Thyroid gland (tissue), 4 donors: ENCODE measurements at regions of chr12 and their contacts with region 1.

Region 1: DNA sequence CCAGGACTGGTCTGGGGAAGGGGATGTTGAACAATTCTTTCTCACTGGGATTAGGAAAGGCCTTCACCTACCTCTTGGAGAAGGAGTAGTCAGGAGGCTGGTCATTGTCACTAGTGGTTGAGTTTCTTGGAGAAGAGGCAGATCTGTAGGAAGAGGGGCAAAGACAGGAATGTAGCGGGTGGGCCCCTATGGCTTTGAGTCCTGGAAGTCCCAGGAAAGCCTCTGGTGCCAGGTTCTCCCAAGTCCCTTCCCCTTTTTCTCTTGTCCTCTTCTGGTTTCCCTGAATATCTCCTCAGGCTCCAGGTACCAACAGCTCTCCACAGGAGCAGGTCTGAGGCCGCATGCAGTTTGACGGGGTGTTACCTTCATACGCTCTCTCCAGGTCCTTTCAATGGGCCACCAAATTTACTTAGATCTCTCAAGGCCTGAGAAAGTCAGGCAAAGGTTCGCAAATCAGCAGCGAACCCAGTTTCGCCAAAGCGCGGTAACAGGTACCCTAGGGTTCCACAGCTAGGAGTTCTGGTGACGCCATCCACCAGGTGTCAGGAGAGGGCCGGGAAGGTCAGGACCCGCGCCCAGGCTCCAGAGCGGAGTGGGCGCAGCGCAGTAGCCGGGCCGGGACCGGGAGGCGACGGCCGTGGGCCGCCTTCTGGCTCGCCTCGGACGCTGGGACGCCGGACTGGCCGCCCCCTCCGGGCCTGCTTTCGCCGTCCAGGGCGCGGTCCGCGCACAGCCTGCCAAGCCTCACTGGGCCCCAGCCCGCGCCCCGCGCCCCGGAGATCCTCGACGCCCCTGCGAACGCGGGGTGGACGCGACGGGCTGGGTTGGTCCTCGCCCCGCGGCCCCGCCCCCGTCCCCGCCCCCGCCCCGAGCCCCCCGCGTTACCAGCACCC is 795 bp downstream of the SMAGP start:
- DNase-seq: peak; percentile 58 to 64
- H3K4me3 ChIP-seq: peak overlapping the region in 2 of 3 donors; percentile 49 to 63
- H3K27ac ChIP-seq: peak overlapping the region in 2 of 3 donors; percentile 61 to 73
- H3K4me1 ChIP-seq: peaks cover 9% of the 10 kb centered on the region in 2 donors
- H3K27me3 ChIP-seq: no peaks in the 10 kb centered on the region
- CTCF ChIP-seq: peak in 4 of 6 experiments; percentile 26 to 49 (median 34)
- POLR2A ChIP-seq: no peak

Region 2: GRCh38 chr12:50740307-50740706 is 529.1 kb before region 1 on chr12:
- intact Hi-C with region 1: no loop called
- DNase-seq: no peak
- H3K4me3 ChIP-seq: no peak overlapping the region
- H3K27ac ChIP-seq: no peak overlapping the region
- H3K4me1 ChIP-seq: no peaks in the 10 kb centered on the region
- H3K27me3 ChIP-seq: no peaks in the 10 kb centered on the region
- CTCF ChIP-seq: no peak
- POLR2A ChIP-seq: no peak

Region 3: DNA sequence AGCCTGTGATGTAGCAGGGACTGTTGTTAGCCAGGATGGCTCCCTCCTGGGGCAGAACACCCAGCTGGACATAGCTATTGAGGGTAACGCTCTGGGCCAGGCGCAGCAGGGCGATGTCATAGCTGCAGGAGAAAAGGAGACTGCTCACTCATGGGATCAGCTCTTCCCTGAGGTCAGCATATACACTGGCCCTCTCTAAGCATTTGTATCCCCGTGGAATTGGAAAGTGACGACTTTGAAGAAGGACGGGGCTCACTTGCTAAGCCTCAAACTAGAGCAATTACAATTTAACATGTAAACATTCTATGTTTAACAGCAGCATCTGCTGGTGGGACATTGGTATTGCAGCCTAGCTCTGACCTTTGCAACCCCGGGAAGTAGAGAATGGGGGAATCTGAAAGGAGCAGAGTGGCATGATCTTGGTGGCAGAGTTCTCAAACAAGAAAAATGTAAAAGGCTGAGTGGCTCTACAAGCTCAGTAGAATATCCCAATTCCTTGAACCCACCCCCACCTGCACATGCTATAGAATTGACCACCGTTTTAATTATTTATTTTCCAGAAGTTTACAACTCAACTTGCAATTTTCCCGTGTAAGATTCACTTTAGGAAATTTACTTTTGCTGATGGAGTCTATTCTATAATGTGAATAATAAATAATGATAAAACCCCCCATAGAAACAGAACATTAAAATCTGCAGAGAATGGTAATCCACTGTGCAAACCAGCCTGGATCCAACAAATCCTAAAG is 72.0 kb after region 1 on chr12:
- intact Hi-C with region 1: loop called (anchors 5 kb)
- DNase-seq: peak; percentile 64 to 67
- H3K4me3 ChIP-seq: no peak overlapping the region
- H3K27ac ChIP-seq: peak overlapping the region in 1 of 3 donors; percentile 27
- H3K4me1 ChIP-seq: peaks cover 0 to 2% of the 10 kb centered on the region in 2 donors
- H3K27me3 ChIP-seq: no peaks in the 10 kb centered on the region
- CTCF ChIP-seq: peak; percentile 89 to 98 (median 96)
- POLR2A ChIP-seq: no peak

Region 4: GRCh38 chr12:51531978-51532497 is 262.6 kb after region 1 on chr12:
- intact Hi-C with region 1: loop called (anchors 5 kb)
- DNase-seq: peak; percentile 74 to 81
- H3K4me3 ChIP-seq: no peak overlapping the region
- H3K27ac ChIP-seq: no peak overlapping the region
- H3K4me1 ChIP-seq: no peaks in the 10 kb centered on the region
- H3K27me3 ChIP-seq: no peaks in the 10 kb centered on the region
- CTCF ChIP-seq: peak; percentile 41 to 88 (median 74)
- POLR2A ChIP-seq: no peak